SK-N-SH (cell line): ENCODE measurements at regions of chr2 and their contacts with region 1.

Region 1: GRCh38 chr2:178414266-178415247 is 36.4 kb downstream of the PRKRA start:
- DNase-seq: peak; percentile 79
- H3K4me3 ChIP-seq: peak overlapping the region; percentile 55 to 75
- H3K27ac ChIP-seq: peak overlapping the region; percentile 89 to 96
- H3K4me1 ChIP-seq: peaks cover 3 to 6% of the 10 kb centered on the region in 2 experiments; a peak in 3 of 4 replicates
- H3K27me3 ChIP-seq: no peaks in the 10 kb centered on the region
- CTCF ChIP-seq: peak; percentile 94
- EP300 ChIP-seq: no peak
- RAD21 ChIP-seq: peak; percentile 85

Region 2: DNA sequence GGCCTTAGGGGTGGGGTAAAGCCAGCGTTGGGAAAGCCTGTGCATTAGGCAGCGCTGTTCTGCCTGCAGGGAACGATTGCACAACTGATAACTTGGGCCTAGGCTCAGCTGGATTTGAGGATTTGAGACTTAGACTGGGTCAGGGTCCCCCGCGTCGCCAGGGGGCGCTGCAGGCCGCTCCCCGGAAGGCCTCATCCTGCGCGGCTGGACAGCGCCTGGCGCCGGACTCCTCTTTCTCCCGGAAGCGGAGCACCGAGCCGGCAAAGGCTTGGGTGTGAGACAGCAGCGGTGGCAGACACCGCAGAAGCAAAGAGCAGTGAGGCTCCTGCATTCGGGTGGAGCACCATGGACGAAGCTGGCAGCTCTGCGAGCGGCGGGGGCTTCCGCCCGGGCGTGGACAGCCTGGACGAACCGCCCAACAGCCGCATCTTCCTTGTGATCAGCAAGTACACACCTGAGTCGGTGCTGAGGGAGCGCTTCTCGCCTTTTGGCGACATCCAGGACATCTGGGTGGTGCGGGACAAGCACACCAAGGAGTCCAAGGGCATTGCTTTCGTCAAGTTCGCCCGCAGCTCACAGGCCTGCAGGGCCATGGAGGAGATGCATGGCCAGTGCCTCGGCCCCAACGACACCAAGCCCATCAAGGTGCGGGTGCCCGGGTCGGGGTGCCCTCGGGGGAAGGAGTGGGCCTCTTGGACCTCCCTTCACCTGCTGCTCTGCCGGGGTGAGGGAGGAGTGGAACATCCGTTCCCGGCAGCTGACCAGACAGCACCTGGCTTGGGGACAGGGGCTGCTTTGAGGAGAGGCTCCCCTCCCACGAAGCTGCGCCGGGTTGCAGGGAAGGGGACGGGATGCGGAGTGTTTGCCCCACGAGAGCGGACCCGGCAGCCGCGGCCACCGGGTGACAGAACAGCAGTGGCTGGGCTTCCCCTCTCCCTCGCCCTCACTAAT is 302.1 kb before region 1 on chr2 and contains the start of gene RBM45:
- CTCF ChIA-PET with region 1: interaction called, 41 read pairs
- POLR2A ChIA-PET with region 1: interaction called, 3 read pairs
- DNase-seq: peak; percentile 95
- H3K4me3 ChIP-seq: peak within 1 kb of the TSS; percentile 94 to 98
- H3K27ac ChIP-seq: peak within 1 kb of the TSS; percentile 45 to 77; a peak in 3 of 4 replicates
- H3K4me1 ChIP-seq: peaks cover 9% of the 10 kb centered on the region in 2 experiments; a peak in 3 of 4 replicates
- H3K27me3 ChIP-seq: no peaks in the 10 kb centered on the region
- CTCF ChIP-seq: peak; percentile 96
- EP300 ChIP-seq: peak in 1 of 2 experiments; percentile 63; a peak in 2 of 4 replicates
- RAD21 ChIP-seq: peak; percentile 51
- polyA plus RNA-seq, gene RBM45: 7.0 and 8.1 TPM in 2 replicates

Region 3: GRCh38 chr2:178306352-178307073 is 108.0 kb before region 1 on chr2:
- CTCF ChIA-PET with region 1: interaction called, 21 read pairs
- POLR2A ChIA-PET with region 1: no interaction called
- DNase-seq: peak; percentile 47
- H3K4me3 ChIP-seq: no peak overlapping the region
- H3K27ac ChIP-seq: no peak overlapping the region
- H3K4me1 ChIP-seq: no peaks in the 10 kb centered on the region
- H3K27me3 ChIP-seq: no peaks in the 10 kb centered on the region
- CTCF ChIP-seq: peak; percentile 52
- EP300 ChIP-seq: no peak
- RAD21 ChIP-seq: peak; percentile 81

Region 4: GRCh38 chr2:178345951-178346350 is 68.6 kb before region 1 on chr2:
- CTCF ChIA-PET with region 1: no interaction called
- POLR2A ChIA-PET with region 1: no interaction called
- DNase-seq: no peak
- H3K4me3 ChIP-seq: no peak overlapping the region
- H3K27ac ChIP-seq: no peak overlapping the region
- H3K4me1 ChIP-seq: no peaks in the 10 kb centered on the region
- H3K27me3 ChIP-seq: no peaks in the 10 kb centered on the region
- CTCF ChIP-seq: no peak
- EP300 ChIP-seq: no peak
- RAD21 ChIP-seq: no peak

Region 5: DNA sequence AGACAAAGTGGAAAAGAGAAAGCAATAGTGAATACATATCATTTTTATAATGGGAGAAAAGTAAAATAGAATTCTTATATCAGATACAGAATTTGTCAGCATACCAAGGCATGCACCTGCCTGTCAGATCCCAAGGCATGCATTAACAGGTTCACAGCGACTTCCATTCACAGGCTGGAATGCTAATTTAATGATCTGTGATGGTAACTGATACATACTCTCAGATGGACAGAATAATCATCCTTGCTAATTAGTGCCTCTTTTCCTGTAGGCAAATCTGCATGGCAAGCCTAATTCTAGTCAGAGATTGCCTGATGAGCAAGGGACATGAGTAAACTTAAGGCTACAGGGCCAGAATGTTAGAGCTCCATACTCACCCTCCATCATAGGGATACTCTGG is 39.7 kb before region 1 on chr2:
- CTCF ChIA-PET with region 1: interaction called, 11 read pairs
- POLR2A ChIA-PET with region 1: interaction called, 3 read pairs
- DNase-seq: no peak
- H3K4me3 ChIP-seq: no peak overlapping the region
- H3K27ac ChIP-seq: no peak overlapping the region
- H3K4me1 ChIP-seq: no peaks in the 10 kb centered on the region; a peak in 1 of 4 replicates
- H3K27me3 ChIP-seq: no peaks in the 10 kb centered on the region
- CTCF ChIP-seq: no peak
- EP300 ChIP-seq: no peak
- RAD21 ChIP-seq: no peak

Region 6: GRCh38 chr2:178426388-178426787 is 11.8 kb after region 1 on chr2:
- CTCF ChIA-PET with region 1: interaction called, 33 read pairs
- POLR2A ChIA-PET with region 1: interaction called, 3 read pairs
- DNase-seq: no peak
- H3K4me3 ChIP-seq: no peak overlapping the region; a peak in 1 of 4 replicates
- H3K27ac ChIP-seq: no peak overlapping the region
- H3K4me1 ChIP-seq: no peaks in the 10 kb centered on the region
- H3K27me3 ChIP-seq: no peaks in the 10 kb centered on the region
- CTCF ChIP-seq: no peak
- EP300 ChIP-seq: no peak
- RAD21 ChIP-seq: no peak

Region 7: GRCh38 chr2:178450774-178451525 is 36.4 kb after region 1 on chr2 and contains the starts of genes PJVK and PRKRA:
- CTCF ChIA-PET with region 1: interaction called, 22 read pairs
- POLR2A ChIA-PET with region 1: interaction called, 22 read pairs
- DNase-seq: peak; percentile 98
- H3K4me3 ChIP-seq: peak within 1 kb of the TSS; percentile 97 to 100
- H3K27ac ChIP-seq: peak within 1 kb of the TSS; percentile 91 to 98
- H3K4me1 ChIP-seq: peaks cover 0 to 22% of the 10 kb centered on the region in 2 experiments; a peak in 2 of 4 replicates
- H3K27me3 ChIP-seq: no peaks in the 10 kb centered on the region
- CTCF ChIP-seq: no peak
- EP300 ChIP-seq: 0 out of 4 replicates have a peak, but pooled peaks of 1 of the 2 experiments have one; percentile 22
- RAD21 ChIP-seq: no peak
- polyA plus RNA-seq, gene PJVK: 5.3 and 10.8 TPM in 2 replicates
- polyA plus RNA-seq, gene PRKRA: 35.7 and 44.3 TPM in 2 replicates

Region 8: GRCh38 chr2:178530625-178531142 is 116.1 kb after region 1 on chr2:
- CTCF ChIA-PET with region 1: no interaction called
- POLR2A ChIA-PET with region 1: no interaction called
- DNase-seq: no peak
- H3K4me3 ChIP-seq: no peak overlapping the region
- H3K27ac ChIP-seq: no peak overlapping the region
- H3K4me1 ChIP-seq: no peaks in the 10 kb centered on the region
- H3K27me3 ChIP-seq: no peaks in the 10 kb centered on the region
- CTCF ChIP-seq: no peak
- EP300 ChIP-seq: no peak
- RAD21 ChIP-seq: no peak

Region 9: DNA sequence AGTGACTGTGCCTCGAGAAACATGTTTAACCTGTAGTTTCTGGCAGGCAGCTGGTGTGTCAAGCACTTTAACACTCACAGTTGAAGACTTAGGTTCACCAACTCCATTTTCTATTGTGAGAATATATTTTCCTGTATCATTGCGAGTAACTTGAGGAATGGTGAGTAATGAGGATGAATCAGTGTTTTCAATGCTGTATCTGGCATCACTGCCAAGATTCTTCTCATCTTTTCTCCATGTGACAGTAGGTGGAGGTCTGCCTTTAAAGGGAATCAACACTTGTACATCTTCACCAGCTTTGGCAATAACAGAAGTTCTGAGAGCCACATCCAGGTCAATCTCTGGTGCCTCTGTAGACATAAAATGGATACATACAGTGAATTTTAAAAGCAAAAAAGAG is 138.5 kb after region 1 on chr2:
- CTCF ChIA-PET with region 1: no interaction called
- POLR2A ChIA-PET with region 1: no interaction called
- DNase-seq: no peak
- H3K4me3 ChIP-seq: no peak overlapping the region
- H3K27ac ChIP-seq: peak overlapping the region in 1 of 2 experiments; percentile 88; a peak in 2 of 4 replicates
- H3K4me1 ChIP-seq: no peaks in the 10 kb centered on the region
- H3K27me3 ChIP-seq: no peaks in the 10 kb centered on the region
- CTCF ChIP-seq: no peak
- EP300 ChIP-seq: no peak; a peak in 1 of 4 replicates
- RAD21 ChIP-seq: no peak